Breast epithelium (tissue), 4 donors: ENCODE measurements at regions of chr10 and their contacts with region 1.

Region 1: DNA sequence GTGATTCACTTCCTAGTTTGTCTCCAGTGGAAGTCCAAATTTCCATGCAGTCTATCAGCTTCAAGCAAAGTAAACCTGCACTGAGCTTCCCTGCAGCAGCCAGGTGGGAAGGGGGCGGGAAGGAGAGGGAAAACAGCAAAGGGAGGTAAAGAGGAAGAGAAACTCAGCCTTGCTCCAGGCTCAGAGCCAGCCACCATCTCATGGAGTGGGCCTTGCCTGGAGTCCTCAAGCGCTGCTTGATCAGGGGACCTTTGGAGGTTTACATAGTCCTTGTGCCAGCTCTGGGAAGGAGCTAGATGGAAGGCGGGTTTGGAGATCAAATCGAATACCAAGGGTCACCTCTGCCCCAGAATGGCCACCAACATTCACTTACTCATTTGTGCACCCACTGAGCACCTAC is 7.4 kb downstream of the CRTAC1 start:
- DNase-seq: no peak
- H3K4me3 ChIP-seq: no peak overlapping the region
- H3K27ac ChIP-seq: no peak overlapping the region
- H3K4me1 ChIP-seq: no peaks in the 10 kb centered on the region
- H3K27me3 ChIP-seq: peaks cover 0 to 11% of the 10 kb centered on the region in 2 donors
- CTCF ChIP-seq: no peak
- POLR2A ChIP-seq: no peak

Region 2: GRCh38 chr10:97318772-97319651 is 704.0 kb before region 1 on chr10 and contains the start of gene FRAT1:
- intact Hi-C with region 1: loop called (anchors 5 kb)
- DNase-seq: peak; percentile 81 to 90
- H3K4me3 ChIP-seq: peak within 1 kb of the TSS; percentile 74 to 95 (median 88)
- H3K27ac ChIP-seq: peak within 1 kb of the TSS; percentile 98 to 99
- H3K4me1 ChIP-seq: peaks cover 0 to 4% of the 10 kb centered on the region in 2 donors
- H3K27me3 ChIP-seq: no peaks in the 10 kb centered on the region
- CTCF ChIP-seq: peak in 1 of 3 donors; percentile 23
- POLR2A ChIP-seq: peak; percentile 32
- total RNA-seq, gene FRAT1: 3.6 to 11.6 (median 9.8) TPM

Region 3: DNA sequence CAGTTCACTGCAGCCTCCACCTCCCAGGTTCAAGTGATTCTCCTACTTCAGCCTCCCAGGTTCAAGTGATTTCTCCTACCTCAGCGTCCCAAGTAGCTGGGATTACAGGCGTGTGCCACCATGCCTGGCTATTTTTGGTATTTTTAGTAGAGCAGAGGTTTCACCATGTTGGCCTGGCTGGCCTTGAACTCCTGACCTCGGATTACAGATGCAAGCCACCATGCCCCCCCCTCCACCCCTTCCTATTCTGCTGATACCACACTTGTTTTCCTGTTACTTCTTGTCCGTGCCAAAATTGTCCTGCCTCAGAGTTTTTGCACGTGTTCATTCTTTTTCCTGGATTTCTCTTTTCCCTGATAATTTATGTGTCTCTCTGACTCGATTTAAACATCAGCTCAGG is 174.0 kb after region 1 on chr10:
- intact Hi-C with region 1: no loop called
- DNase-seq: no peak
- H3K4me3 ChIP-seq: no peak overlapping the region
- H3K27ac ChIP-seq: no peak overlapping the region
- H3K4me1 ChIP-seq: no peaks in the 10 kb centered on the region
- H3K27me3 ChIP-seq: no peaks in the 10 kb centered on the region
- CTCF ChIP-seq: no peak
- POLR2A ChIP-seq: no peak